Panc1 (cell line): ENCODE measurements at regions of chr6 and their contacts with region 1.

Region 1: DNA sequence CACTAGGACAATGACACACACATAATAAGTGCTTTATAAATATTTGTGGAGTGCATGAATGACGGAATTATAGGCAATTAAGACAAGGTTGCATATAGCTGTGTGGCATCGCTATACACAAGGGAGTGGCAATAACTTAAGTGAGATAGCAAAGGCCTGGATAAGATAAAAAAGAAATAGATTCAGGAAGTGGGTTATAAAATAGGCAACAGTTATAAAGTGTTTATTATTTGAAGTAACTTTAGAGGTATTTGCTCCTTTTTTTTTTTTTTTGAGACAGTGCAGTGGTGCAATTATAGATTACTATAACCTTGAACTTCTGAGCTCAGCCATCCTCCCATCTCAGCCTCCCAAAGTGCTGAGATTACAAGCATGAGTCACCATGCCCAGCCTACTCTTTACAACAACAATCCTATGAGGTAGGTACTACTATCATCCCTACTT is 75.9 kb upstream of the LOC128125822 start:
- DNase-seq: no peak
- ATAC-seq: no peak
- H3K4me3 ChIP-seq: no peak overlapping the region
- H3K27ac ChIP-seq: no peak overlapping the region
- H3K4me1 ChIP-seq: no peaks in the 10 kb centered on the region
- H3K27me3 ChIP-seq: no peaks in the 10 kb centered on the region
- CTCF ChIP-seq: no peak

Region 2: DNA sequence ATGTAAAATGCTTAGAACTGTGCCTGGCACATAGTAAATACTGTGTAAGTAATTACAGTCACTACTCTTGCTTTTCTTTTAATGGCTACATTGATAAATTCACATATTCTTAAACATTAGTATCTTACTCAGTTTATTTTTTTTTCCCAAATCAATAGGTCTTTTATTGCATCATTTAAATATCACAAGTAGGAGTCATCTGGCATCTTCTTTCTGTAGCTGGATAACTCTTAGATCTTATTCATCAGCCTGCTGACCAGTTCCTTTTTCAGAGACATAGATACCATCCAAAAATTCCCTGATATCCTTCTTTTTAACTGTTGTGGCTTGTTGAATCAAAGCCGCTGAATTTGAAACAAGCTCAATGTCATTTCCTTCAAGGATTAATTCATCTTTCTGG is 119.2 kb after region 1 on chr6:
- CTCF ChIA-PET with region 1: no interaction called
- POLR2A ChIA-PET with region 1: interaction called, 14 read pairs
- in situ Hi-C with region 1: no loop called
- intact Hi-C with region 1: no loop called
- DNase-seq: no peak
- ATAC-seq: no peak
- H3K4me3 ChIP-seq: no peak overlapping the region
- H3K27ac ChIP-seq: no peak overlapping the region
- H3K4me1 ChIP-seq: no peaks in the 10 kb centered on the region
- H3K27me3 ChIP-seq: peaks cover 5% of the 10 kb centered on the region
- CTCF ChIP-seq: no peak